A673 (cell line): ENCODE measurements at regions of chr6 and their contacts with region 1.

Region 1: GRCh38 chr6:85354761-85355618 is 94.9 kb upstream of the NT5E start:
- DNase-seq: peak; percentile 87
- H3K4me3 ChIP-seq: no peak overlapping the region
- H3K27ac ChIP-seq: no peak overlapping the region
- H3K4me1 ChIP-seq: no peaks in the 10 kb centered on the region
- H3K27me3 ChIP-seq: no peaks in the 10 kb centered on the region
- CTCF ChIP-seq: peak; percentile 95

Region 2: DNA sequence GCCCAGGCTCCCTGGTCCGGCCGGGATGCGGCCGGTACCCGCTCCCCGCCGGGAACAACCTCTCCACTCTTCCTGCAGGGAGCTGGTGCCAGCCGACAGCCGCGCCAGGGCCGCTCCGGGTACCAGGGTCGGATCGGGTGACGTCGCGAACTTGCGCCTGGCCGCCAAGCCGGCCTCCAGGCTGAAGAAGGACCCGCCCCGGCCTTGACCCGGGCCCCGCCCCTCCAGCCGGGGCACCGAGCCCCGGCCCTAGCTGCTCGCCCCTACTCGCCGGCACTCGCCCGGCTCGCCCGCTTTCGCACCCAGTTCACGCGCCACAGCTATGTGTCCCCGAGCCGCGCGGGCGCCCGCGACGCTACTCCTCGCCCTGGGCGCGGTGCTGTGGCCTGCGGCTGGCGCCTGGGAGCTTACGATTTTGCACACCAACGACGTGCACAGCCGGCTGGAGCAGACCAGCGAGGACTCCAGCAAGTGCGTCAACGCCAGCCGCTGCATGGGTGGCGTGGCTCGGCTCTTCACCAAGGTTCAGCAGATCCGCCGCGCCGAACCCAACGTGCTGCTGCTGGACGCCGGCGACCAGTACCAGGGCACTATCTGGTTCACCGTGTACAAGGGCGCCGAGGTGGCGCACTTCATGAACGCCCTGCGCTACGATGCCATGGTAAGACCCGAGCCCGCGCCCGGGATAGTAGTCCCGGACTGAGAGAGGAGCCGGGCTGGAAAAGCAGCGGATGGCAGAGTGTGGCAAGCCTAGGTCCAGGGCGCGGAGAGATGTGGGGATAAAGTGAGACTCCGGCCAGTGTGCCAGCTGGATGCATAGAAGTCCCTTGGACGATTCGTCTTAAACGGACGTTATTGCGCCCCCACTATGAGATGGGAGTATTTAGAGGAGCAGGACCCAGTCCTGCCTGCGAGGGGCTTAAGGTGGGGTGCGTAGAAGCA is 95.1 kb after region 1 on chr6 and contains the start of gene NT5E:
- CTCF ChIA-PET with region 1: no interaction called
- POLR2A ChIA-PET with region 1: no interaction called
- intact Hi-C with region 1: no loop called
- DNase-seq: peak; percentile 83
- H3K4me3 ChIP-seq: peak within 1 kb of the TSS; percentile 60
- H3K27ac ChIP-seq: peak within 1 kb of the TSS; percentile 67
- H3K4me1 ChIP-seq: peaks cover 5% of the 10 kb centered on the region
- H3K27me3 ChIP-seq: peaks cover 5% of the 10 kb centered on the region
- CTCF ChIP-seq: peak; percentile 35; the same call in 1 of the 2 replicates
- total RNA-seq, gene NT5E: 26.0 and 32.7 TPM in 2 replicates

Region 3: GRCh38 chr6:85482905-85483700 is 128.1 kb after region 1 on chr6:
- CTCF ChIA-PET with region 1: interaction called, 49 read pairs
- POLR2A ChIA-PET with region 1: interaction called, 3 read pairs
- intact Hi-C with region 1: loop called (anchors 1 kb)
- DNase-seq: peak; percentile 83
- H3K4me3 ChIP-seq: no peak overlapping the region
- H3K27ac ChIP-seq: no peak overlapping the region
- H3K4me1 ChIP-seq: no peaks in the 10 kb centered on the region
- H3K27me3 ChIP-seq: no peaks in the 10 kb centered on the region
- CTCF ChIP-seq: peak; percentile 99

Region 4: GRCh38 chr6:85537055-85537494 is 182.1 kb after region 1 on chr6:
- CTCF ChIA-PET with region 1: interaction called, 4 read pairs
- POLR2A ChIA-PET with region 1: no interaction called
- intact Hi-C with region 1: loop called (anchors 1 kb)
- DNase-seq: peak; percentile 28
- H3K4me3 ChIP-seq: no peak overlapping the region
- H3K27ac ChIP-seq: no peak overlapping the region
- H3K4me1 ChIP-seq: no peaks in the 10 kb centered on the region
- H3K27me3 ChIP-seq: no peaks in the 10 kb centered on the region
- CTCF ChIP-seq: peak; percentile 70; the same call in 1 of the 2 replicates